K562 (cell line): ENCODE measurements at regions of chr15 and their contacts with region 1.

Region 1: GRCh38 chr15:81155375-81156218 is 21.5 kb downstream of the CFAP161 start:
- DNase-seq: peak; percentile 37 to 72 (median 53)
- ATAC-seq: peak; percentile 86
- H3K4me3 ChIP-seq: no peak overlapping the region
- H3K27ac ChIP-seq: no peak overlapping the region
- H3K4me1 ChIP-seq: no peaks in the 10 kb centered on the region; a peak in 3 of 5 replicates
- H3K27me3 ChIP-seq: no peaks in the 10 kb centered on the region
- CTCF ChIP-seq: peak; percentile 67 to 86 (median 71)
- EP300 ChIP-seq: no peak
- POLR2A ChIP-seq: no peak
- RAD21 ChIP-seq: peak; percentile 80 to 87

Region 2: GRCh38 chr15:80977627-80978036 is 178.0 kb before region 1 on chr15:
- CTCF ChIA-PET with region 1: interaction called, 6 read pairs
- POLR2A ChIA-PET with region 1: no interaction called
- in situ Hi-C with region 1: no loop called
- intact Hi-C with region 1: loop called (anchors 2 kb)
- DNase-seq: peak; percentile 77 to 87 (median 80)
- ATAC-seq: peak; percentile 99
- H3K4me3 ChIP-seq: no peak overlapping the region
- H3K27ac ChIP-seq: no peak overlapping the region
- H3K4me1 ChIP-seq: peaks cover 0 to 3% of the 10 kb centered on the region in 2 experiments; a peak in 2 of 5 replicates
- H3K27me3 ChIP-seq: no peaks in the 10 kb centered on the region
- CTCF ChIP-seq: peak; percentile 92 to 95 (median 92)
- EP300 ChIP-seq: no peak
- POLR2A ChIP-seq: no peak
- RAD21 ChIP-seq: peak; percentile 88 to 94

Region 3: GRCh38 chr15:80989518-80990478 is 165.8 kb before region 1 on chr15 and contains the start of gene MESD:
- CTCF ChIA-PET with region 1: no interaction called
- POLR2A ChIA-PET with region 1: no interaction called
- in situ Hi-C with region 1: no loop called
- intact Hi-C with region 1: loop called (anchors 5 kb)
- DNase-seq: peak; percentile 97 to 99 (median 98)
- ATAC-seq: peak; percentile 97
- H3K4me3 ChIP-seq: peak within 1 kb of the TSS; percentile 65
- H3K27ac ChIP-seq: peak within 1 kb of the TSS; percentile 75
- H3K4me1 ChIP-seq: peaks cover 10 to 42% of the 10 kb centered on the region in 2 experiments
- H3K27me3 ChIP-seq: no peaks in the 10 kb centered on the region
- CTCF ChIP-seq: no peak
- EP300 ChIP-seq: peak; percentile 25; the same call in 1 of the 2 replicates
- POLR2A ChIP-seq: peak; percentile 94
- RAD21 ChIP-seq: no peak
- polyA plus RNA-seq, gene MESD: 11.3 to 17.0 TPM

Region 4: DNA sequence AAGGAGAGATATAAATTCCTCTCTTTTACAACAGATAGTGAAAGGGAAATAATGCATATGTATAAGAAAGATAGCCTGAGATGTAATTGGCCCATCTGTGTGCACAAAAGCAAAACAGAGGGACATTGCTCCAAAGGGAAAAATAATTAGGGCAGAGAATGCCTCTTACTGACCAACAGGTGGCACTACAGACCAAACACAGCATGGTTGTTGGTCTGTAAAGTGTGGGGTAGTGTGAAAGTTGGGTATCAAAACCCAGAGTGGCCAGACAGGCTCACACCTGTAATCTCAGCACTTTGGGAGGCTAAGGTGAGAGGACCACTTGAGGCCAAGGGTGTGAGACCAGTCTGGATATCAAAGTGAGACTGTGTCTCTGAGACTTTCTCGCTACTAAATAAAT is 159.3 kb before region 1 on chr15:
- CTCF ChIA-PET with region 1: no interaction called
- POLR2A ChIA-PET with region 1: no interaction called
- in situ Hi-C with region 1: no loop called
- intact Hi-C with region 1: loop called (anchors 5 kb)
- DNase-seq: peak; percentile 27 to 67 (median 36)
- ATAC-seq: no peak
- H3K4me3 ChIP-seq: no peak overlapping the region
- H3K27ac ChIP-seq: no peak overlapping the region
- H3K4me1 ChIP-seq: peaks cover 11 to 19% of the 10 kb centered on the region in 2 experiments
- H3K27me3 ChIP-seq: no peaks in the 10 kb centered on the region
- CTCF ChIP-seq: peak; percentile 65 to 76 (median 75)
- EP300 ChIP-seq: no peak
- POLR2A ChIP-seq: no peak
- RAD21 ChIP-seq: peak; percentile 40 to 84; a peak in 3 of 4 replicates

Region 5: DNA sequence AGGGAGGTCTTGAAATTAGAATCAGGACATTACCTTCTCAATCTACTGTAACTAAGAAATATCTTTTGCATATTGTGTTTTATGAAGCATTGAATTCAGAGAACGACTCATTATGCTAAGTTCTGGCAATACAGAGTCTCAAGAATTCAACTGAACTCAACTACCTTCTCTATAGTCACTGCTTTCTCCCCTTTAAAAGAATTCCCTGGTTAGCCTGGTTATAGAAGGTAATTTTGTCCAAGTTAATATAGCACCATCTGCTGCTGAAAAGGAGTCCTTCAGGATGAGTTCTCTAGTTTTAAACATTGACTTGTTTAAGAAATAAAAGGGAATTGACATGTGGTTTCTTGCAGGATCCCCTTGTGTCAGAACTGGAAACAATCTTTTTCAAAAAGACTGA is 101.3 kb after region 1 on chr15:
- CTCF ChIA-PET with region 1: interaction called, 25 read pairs
- POLR2A ChIA-PET with region 1: no interaction called
- in situ Hi-C with region 1: no loop called
- intact Hi-C with region 1: loop called (anchors 1 kb)
- DNase-seq: peak in 2 of 4 experiments; percentile 27 to 30
- ATAC-seq: peak; percentile 78
- H3K4me3 ChIP-seq: no peak overlapping the region
- H3K27ac ChIP-seq: no peak overlapping the region
- H3K4me1 ChIP-seq: peaks cover 0 to 3% of the 10 kb centered on the region in 2 experiments; a peak in 2 of 5 replicates
- H3K27me3 ChIP-seq: no peaks in the 10 kb centered on the region
- CTCF ChIP-seq: peak; percentile 40 to 70 (median 41); a peak in 4 of 6 replicates
- EP300 ChIP-seq: no peak
- POLR2A ChIP-seq: no peak
- RAD21 ChIP-seq: peak; percentile 75

Region 6: GRCh38 chr15:81265944-81266775 is 110.6 kb after region 1 on chr15:
- CTCF ChIA-PET with region 1: interaction called, 38 read pairs
- POLR2A ChIA-PET with region 1: interaction called, 9 read pairs
- in situ Hi-C with region 1: loop called (anchors 5 kb)
- intact Hi-C with region 1: loop called (anchors 1 kb)
- DNase-seq: peak; percentile 90 to 92 (median 90)
- ATAC-seq: peak; percentile 98
- H3K4me3 ChIP-seq: no peak overlapping the region
- H3K27ac ChIP-seq: peak overlapping the region; percentile 63
- H3K4me1 ChIP-seq: peaks cover 2 to 13% of the 10 kb centered on the region in 2 experiments; a peak in 3 of 5 replicates
- H3K27me3 ChIP-seq: no peaks in the 10 kb centered on the region
- CTCF ChIP-seq: peak; percentile 91 to 96 (median 91)
- EP300 ChIP-seq: 0 out of 2 replicates have a peak, but pooled peaks have one; percentile 28
- POLR2A ChIP-seq: 0 out of 2 replicates have a peak, but pooled peaks have one; percentile 36
- RAD21 ChIP-seq: peak; percentile 92 to 95